ENCODE measurements at regions of chr12 and their contacts with region 1.

Region 1: GRCh38 chr12:68807576-68808387 is at the start of gene MDM2:
- DNase-seq: peak; percentile 98
- H3K4me3 Mint-ChIP-seq: peak within 1 kb of the TSS; percentile 97
- H3K27ac Mint-ChIP-seq: peak within 1 kb of the TSS; percentile 99
- H3K4me1 Mint-ChIP-seq: peaks cover 34% of the 10 kb centered on the region
- H3K27me3 Mint-ChIP-seq: peaks cover 2% of the 10 kb centered on the region
- total RNA-seq, gene MDM2: 279 and 303 TPM in 2 replicates

Region 2: GRCh38 chr12:67630373-67631088 is 1177.3 kb before region 1 on chr12:
- intact Hi-C with region 1: loop called (anchors 10 kb)
- DNase-seq: peak; percentile 81
- H3K4me3 Mint-ChIP-seq: peak overlapping the region; percentile 37
- H3K27ac Mint-ChIP-seq: peak overlapping the region; percentile 89
- H3K4me1 Mint-ChIP-seq: peaks cover 62% of the 10 kb centered on the region
- H3K27me3 Mint-ChIP-seq: no peaks in the 10 kb centered on the region

Region 3: GRCh38 chr12:68331869-68332727 is 475.7 kb before region 1 on chr12 and contains the start of gene MDM1:
- intact Hi-C with region 1: loop called (anchors 1 kb)
- DNase-seq: peak; percentile 95
- H3K4me3 Mint-ChIP-seq: peak within 1 kb of the TSS; percentile 89
- H3K27ac Mint-ChIP-seq: peak within 1 kb of the TSS; percentile 77
- H3K4me1 Mint-ChIP-seq: peaks cover 55% of the 10 kb centered on the region
- H3K27me3 Mint-ChIP-seq: peaks cover 2% of the 10 kb centered on the region
- total RNA-seq, gene MDM1: 26.8 and 29.9 TPM in 2 replicates

Region 4: DNA sequence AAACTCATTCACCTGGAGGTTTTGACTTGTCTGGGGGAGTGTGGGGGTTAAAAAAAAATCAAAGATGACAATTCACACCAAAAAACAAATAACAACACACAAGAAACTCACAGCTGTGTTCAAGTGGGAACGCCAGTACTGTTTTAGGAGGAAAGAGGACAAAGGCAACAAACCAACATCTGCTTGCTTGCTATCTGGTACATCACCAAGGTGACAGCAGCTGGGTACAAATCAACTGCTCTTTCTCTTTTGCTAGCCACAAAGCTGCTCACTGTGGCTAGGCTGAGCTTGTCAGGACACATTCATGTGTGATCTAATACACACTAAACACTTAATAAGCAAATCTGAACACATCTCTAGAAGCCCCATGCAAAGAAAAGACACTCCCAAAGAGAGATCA is 325.1 kb before region 1 on chr12:
- intact Hi-C with region 1: loop called (anchors 1 kb)
- DNase-seq: peak; percentile 44
- H3K4me3 Mint-ChIP-seq: peak overlapping the region; percentile 66
- H3K27ac Mint-ChIP-seq: peak overlapping the region; percentile 91
- H3K4me1 Mint-ChIP-seq: peaks cover 69% of the 10 kb centered on the region
- H3K27me3 Mint-ChIP-seq: no peaks in the 10 kb centered on the region

Region 5: GRCh38 chr12:68641138-68641537 is 166.6 kb before region 1 on chr12:
- intact Hi-C with region 1: loop called (anchors 1 kb)
- DNase-seq: peak; percentile 36
- H3K4me3 Mint-ChIP-seq: peak overlapping the region; percentile 61
- H3K27ac Mint-ChIP-seq: peak overlapping the region; percentile 71
- H3K4me1 Mint-ChIP-seq: peaks cover 63% of the 10 kb centered on the region
- H3K27me3 Mint-ChIP-seq: no peaks in the 10 kb centered on the region

Region 6: GRCh38 chr12:68792952-68793835 is 14.6 kb before region 1 on chr12:
- intact Hi-C with region 1: loop called (anchors 2 kb)
- DNase-seq: no peak
- H3K4me3 Mint-ChIP-seq: no peak overlapping the region
- H3K27ac Mint-ChIP-seq: no peak overlapping the region
- H3K4me1 Mint-ChIP-seq: no peaks in the 10 kb centered on the region
- H3K27me3 Mint-ChIP-seq: no peaks in the 10 kb centered on the region

Region 7: GRCh38 chr12:68899251-68899771 is 91.5 kb after region 1 on chr12:
- intact Hi-C with region 1: no loop called
- DNase-seq: no peak
- H3K4me3 Mint-ChIP-seq: no peak overlapping the region
- H3K27ac Mint-ChIP-seq: no peak overlapping the region
- H3K4me1 Mint-ChIP-seq: peaks cover under 1% of the 10 kb centered on the region
- H3K27me3 Mint-ChIP-seq: peaks cover 2% of the 10 kb centered on the region

Region 8: GRCh38 chr12:69585189-69586062 is 777.6 kb after region 1 on chr12 and contains the start of gene CCT2:
- intact Hi-C with region 1: loop called (anchors 10 kb)
- DNase-seq: peak; percentile 94
- H3K4me3 Mint-ChIP-seq: peak within 1 kb of the TSS; percentile 98
- H3K27ac Mint-ChIP-seq: peak within 1 kb of the TSS; percentile 97
- H3K4me1 Mint-ChIP-seq: peaks cover 11% of the 10 kb centered on the region
- H3K27me3 Mint-ChIP-seq: no peaks in the 10 kb centered on the region
- total RNA-seq, gene CCT2: 442 and 447 TPM in 2 replicates